OCI-LY7 (cell line): ENCODE measurements at regions of chr11 and their contacts with region 1.

Region 1: DNA sequence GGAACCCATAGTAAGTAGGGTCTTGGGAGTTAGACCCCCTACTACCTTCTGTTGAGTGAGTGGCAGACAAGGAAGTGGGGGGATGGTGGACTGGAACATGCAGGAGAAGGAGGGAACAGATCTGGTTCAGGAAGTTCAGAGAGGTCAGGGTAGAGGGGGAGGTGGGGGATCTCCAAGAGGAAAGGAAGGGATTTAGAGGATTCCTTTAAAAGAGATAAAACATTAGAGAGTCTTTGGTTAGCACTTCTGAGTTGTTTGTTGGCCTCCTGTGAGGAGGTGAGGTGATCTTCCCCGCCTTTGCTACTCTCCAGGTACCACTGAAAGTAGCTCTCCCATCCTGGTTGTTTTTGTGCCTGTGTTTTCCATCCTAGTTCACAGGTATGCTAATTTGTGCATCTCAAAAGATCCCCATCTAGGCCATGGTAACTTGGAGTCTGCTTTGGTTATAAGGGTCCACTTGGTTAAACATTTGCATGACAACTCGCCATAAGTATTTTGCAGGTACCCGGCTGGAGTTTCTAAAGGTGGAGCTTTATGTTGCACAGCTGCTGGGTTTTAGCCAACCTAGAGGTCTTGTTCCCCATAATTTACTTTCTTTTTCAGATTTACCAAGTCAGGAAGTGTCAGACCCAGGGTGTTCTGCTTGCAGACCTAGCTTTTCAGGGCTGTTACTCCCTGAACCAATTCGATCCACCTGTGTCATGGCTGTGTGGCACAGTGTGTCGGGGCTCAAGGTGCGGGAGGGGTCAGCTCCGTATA is 79.3 kb upstream of the SORL1 start:
- DNase-seq: peak; percentile 90
- H3K4me3 ChIP-seq: peak overlapping the region; percentile 49
- H3K27ac ChIP-seq: peak overlapping the region; percentile 98
- H3K4me1 ChIP-seq: peaks cover 98% of the 10 kb centered on the region
- CTCF ChIP-seq: no peak

Region 2: DNA sequence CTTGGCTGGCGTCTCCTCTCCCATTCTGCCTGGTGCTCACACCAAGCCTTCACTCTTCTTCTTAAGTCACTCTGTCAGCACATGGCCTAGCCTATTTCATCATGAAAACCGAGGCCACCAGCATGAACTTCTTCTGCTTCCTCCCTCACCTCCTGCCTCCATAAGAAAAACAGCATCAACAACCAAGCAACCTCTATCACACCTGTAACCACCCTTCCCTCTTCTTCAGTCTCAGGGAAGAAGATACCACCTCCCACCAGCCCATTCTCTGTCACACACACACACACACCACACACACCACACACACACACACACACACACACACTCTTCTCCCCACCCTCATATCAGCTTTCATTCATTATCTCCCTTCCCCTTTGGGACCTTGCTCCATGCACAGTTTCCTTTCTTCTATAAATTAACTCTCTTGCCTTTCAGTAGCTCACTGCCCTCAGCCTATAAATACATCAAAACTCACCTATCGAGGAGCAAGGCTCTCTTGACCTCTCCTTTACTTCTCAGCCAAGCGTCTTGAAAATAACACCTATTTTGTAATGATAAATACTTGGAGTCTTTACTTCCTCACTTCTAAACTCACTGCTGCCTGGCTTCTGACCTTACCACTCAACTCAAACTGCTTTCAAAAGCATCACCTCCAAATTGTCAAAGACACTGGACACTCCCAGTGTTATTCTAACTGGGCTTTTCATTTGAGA is 43.7 kb before region 1 on chr11:
- CTCF ChIA-PET with region 1: interaction called, 3 read pairs
- POLR2A ChIA-PET with region 1: interaction called, 43 read pairs
- intact Hi-C with region 1: no loop called
- DNase-seq: peak; percentile 66
- H3K4me3 ChIP-seq: peak overlapping the region; percentile 25
- H3K27ac ChIP-seq: peak overlapping the region; percentile 87
- H3K4me1 ChIP-seq: peaks cover 62% of the 10 kb centered on the region
- CTCF ChIP-seq: no peak

Region 3: DNA sequence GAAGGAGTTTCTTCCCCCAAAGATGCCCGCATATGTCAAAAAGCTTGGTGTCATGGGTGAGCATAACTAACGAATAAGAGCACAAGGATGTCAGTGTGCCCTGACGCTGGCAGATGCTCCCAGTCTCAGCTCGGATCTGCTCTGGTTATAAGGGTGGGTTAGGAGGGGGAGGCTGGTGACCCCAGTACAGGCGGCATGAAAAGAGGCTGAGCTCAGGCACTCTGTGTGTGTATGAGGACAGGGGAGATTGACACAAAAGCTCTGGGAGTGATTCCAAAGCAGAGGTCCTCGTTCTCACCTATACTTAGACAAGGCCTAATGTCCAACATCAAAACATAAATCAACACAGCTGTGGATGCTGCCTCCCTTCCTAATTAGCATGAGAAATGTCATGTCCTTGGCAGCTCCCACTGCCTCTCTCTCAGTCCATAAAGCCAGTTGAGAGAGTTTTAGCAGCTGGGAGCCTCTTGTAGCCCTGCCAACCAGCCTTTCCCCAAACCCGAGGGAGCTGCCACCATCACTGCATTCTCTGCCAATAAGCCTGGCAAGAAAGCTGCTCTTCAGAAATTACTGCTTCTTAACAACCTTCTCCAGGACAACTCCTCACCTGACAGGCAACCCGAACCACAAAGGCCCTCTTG is 20.5 kb before region 1 on chr11:
- CTCF ChIA-PET with region 1: interaction called, 5 read pairs
- POLR2A ChIA-PET with region 1: interaction called, 50 read pairs
- intact Hi-C with region 1: no loop called
- DNase-seq: no peak
- H3K4me3 ChIP-seq: no peak overlapping the region
- H3K27ac ChIP-seq: no peak overlapping the region
- H3K4me1 ChIP-seq: peaks cover 52% of the 10 kb centered on the region
- CTCF ChIP-seq: no peak

Region 4: GRCh38 chr11:121389651-121390050 is 16.8 kb after region 1 on chr11:
- CTCF ChIA-PET with region 1: interaction called, 4 read pairs
- POLR2A ChIA-PET with region 1: interaction called, 88 read pairs
- intact Hi-C with region 1: no loop called
- DNase-seq: no peak
- H3K4me3 ChIP-seq: no peak overlapping the region
- H3K27ac ChIP-seq: no peak overlapping the region
- H3K4me1 ChIP-seq: peaks cover 88% of the 10 kb centered on the region
- CTCF ChIP-seq: no peak

Region 5: DNA sequence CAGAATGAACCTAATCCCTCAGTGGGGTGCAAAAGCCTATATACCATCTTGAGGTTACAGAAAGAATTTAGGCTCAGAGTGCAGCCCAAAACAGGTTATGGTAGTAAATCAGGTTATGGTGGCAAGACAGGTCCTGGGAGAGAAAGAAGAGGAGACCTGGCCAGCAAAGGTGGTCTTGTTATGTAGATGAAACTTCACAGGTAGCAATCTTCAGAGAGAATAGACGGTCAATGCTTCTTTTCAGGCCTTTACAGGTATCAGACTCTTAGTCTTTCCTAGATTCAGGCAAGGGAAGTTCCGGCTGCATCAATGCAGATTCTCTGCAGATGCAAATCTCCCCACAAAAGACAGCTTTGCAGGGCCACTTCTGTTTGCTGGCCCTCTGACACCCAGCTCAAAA is 33.4 kb after region 1 on chr11:
- CTCF ChIA-PET with region 1: no interaction called
- POLR2A ChIA-PET with region 1: interaction called, 20 read pairs
- intact Hi-C with region 1: no loop called
- DNase-seq: peak; percentile 75
- H3K4me3 ChIP-seq: peak overlapping the region; percentile 56
- H3K27ac ChIP-seq: peak overlapping the region; percentile 92
- H3K4me1 ChIP-seq: peaks cover 71% of the 10 kb centered on the region
- CTCF ChIP-seq: no peak

Region 6: DNA sequence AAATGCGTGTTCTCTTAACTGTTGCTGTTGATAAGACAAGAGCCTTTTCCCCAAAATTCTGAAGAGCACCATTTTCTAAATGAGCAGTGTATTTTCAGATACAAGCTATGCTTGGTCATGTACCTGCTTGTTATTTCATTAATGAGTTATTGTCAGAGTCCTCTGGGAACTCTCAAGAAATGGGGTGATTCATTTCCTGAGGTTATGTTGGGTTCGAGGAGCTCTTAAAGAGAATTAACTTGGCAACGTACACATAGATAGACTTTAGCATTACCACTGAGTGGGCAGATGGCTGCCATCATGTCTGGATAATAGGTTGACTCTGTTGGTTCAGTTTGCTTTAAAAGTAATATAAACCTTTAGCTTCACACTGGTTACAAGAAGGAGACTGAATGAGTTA is 167.8 kb after region 1 on chr11:
- CTCF ChIA-PET with region 1: no interaction called
- POLR2A ChIA-PET with region 1: no interaction called
- intact Hi-C with region 1: no loop called
- DNase-seq: no peak
- H3K4me3 ChIP-seq: no peak overlapping the region
- H3K27ac ChIP-seq: no peak overlapping the region
- H3K4me1 ChIP-seq: peaks cover 71% of the 10 kb centered on the region
- CTCF ChIP-seq: no peak

Region 7: DNA sequence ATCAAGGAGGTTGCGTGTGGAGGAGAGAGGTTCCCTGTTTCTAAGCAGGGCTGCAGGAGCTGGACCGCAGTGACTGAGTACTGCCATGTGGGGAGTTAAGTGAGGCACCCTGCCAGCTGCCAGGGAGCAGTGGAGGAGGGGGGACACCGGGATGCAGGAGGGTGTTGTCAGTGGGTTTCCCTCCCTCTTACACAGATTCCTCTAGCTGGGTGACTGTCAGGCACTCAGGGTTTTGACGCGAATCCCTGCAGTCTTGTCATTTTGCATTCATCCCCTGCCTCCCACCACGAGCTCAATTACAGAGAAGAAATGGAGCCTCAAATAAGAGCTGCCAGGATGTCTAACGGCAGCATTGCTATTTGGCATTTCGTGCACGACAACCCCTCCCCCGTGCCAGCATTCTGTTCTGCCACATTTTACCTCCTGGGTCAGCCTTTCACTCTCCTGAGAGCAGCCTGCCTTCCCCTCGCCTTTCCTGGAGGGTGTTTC is 199.8 kb after region 1 on chr11:
- CTCF ChIA-PET with region 1: no interaction called
- POLR2A ChIA-PET with region 1: interaction called, 3 read pairs
- intact Hi-C with region 1: loop called (anchors 5 kb)
- DNase-seq: no peak
- H3K4me3 ChIP-seq: no peak overlapping the region
- H3K27ac ChIP-seq: peak overlapping the region; percentile 97
- H3K4me1 ChIP-seq: peaks cover 59% of the 10 kb centered on the region
- CTCF ChIP-seq: no peak